ENCODE measurements at regions of chr19 and their contacts with region 1.

Region 1: DNA sequence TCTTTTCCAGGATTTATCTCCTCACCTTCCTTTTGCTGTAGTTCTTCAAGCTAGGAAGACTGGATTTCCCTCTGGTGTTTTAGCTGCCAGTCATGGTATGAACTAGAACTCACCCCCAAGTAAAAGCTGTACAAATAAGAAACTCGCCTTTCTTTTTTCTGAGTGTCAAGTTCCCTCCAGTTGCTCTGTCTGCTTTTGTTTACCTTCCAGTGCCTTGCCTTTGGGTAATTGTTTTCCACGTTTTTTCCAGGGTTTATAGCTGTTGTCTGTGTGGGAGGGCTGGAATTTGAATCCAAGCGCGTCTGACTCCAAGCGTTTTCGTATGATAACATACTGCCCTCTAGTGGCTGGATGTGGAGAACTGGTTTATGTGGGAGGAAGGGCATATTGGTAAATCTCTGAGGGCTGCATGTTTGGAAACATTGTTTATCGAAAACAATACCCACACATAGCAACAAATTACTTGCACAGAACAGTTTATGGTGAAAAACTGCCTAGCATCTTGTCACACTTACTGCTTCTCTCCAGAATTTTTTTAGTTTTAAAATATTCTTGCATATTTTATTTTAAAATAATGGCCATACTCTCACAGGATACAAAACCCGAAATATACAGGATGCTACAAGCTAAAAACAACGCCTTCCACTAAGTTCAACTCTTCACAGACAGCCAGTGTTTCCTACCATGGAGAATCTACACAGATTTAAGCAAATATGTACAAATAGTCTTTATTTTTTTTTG is 19.2 kb downstream of the RCN3 start:
- DNase-seq: peak; percentile 79
- H3K4me3 Mint-ChIP-seq: peak overlapping the region; percentile 37
- H3K27ac Mint-ChIP-seq: peak overlapping the region; percentile 75
- H3K4me1 Mint-ChIP-seq: peaks cover 65% of the 10 kb centered on the region
- H3K27me3 Mint-ChIP-seq: peaks cover 7% of the 10 kb centered on the region

Region 2: GRCh38 chr19:49473868-49474544 is 73.0 kb before region 1 on chr19 and contains the start of gene FLT3LG:
- CTCF ChIA-PET with region 1: interaction called, 15 read pairs
- DNase-seq: peak; percentile 99
- H3K4me3 Mint-ChIP-seq: peak within 1 kb of the TSS; percentile 89
- H3K27ac Mint-ChIP-seq: peak within 1 kb of the TSS; percentile 90
- H3K4me1 Mint-ChIP-seq: peaks cover 61% of the 10 kb centered on the region
- H3K27me3 Mint-ChIP-seq: peaks cover 6% of the 10 kb centered on the region

Region 3: DNA sequence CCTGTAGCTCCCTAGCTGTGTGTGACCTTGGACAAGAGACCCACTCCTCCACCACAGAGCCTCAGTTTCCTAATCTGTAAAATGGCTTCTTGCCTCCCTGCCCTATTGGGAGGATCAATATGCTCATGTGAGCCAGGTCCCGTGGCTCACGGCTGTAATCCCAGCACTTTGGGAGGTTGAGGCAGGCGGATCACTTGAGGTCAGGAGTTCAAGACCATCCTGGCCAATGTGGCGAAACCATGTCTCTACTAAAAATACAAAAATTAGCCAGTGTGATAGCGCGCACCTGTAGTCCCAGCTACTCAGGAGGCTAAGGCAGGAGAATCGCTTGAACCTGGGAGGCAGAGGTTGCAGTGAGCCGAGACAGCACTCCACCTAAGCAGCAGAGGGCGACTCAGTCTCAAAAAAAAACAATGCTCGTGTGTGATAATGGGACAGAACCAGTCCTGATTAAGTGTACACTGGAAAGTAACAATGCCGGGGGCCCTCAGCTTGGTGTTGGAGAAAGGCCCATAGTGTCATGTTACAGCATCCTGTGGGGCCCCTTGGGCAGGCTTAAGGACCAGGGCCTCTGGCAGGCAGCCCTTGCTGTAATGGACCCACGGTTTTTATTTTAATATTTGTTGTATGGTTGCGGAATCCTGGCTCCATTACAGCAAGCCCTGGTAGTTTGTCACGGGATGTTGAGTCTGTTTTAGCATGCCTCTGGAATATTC is 44.0 kb before region 1 on chr19:
- CTCF ChIA-PET with region 1: interaction called, 183 read pairs
- DNase-seq: peak; percentile 70
- H3K4me3 Mint-ChIP-seq: peak overlapping the region; percentile 4
- H3K27ac Mint-ChIP-seq: peak overlapping the region; percentile 99
- H3K4me1 Mint-ChIP-seq: peaks cover 54% of the 10 kb centered on the region
- H3K27me3 Mint-ChIP-seq: peaks cover 4% of the 10 kb centered on the region

Region 4: DNA sequence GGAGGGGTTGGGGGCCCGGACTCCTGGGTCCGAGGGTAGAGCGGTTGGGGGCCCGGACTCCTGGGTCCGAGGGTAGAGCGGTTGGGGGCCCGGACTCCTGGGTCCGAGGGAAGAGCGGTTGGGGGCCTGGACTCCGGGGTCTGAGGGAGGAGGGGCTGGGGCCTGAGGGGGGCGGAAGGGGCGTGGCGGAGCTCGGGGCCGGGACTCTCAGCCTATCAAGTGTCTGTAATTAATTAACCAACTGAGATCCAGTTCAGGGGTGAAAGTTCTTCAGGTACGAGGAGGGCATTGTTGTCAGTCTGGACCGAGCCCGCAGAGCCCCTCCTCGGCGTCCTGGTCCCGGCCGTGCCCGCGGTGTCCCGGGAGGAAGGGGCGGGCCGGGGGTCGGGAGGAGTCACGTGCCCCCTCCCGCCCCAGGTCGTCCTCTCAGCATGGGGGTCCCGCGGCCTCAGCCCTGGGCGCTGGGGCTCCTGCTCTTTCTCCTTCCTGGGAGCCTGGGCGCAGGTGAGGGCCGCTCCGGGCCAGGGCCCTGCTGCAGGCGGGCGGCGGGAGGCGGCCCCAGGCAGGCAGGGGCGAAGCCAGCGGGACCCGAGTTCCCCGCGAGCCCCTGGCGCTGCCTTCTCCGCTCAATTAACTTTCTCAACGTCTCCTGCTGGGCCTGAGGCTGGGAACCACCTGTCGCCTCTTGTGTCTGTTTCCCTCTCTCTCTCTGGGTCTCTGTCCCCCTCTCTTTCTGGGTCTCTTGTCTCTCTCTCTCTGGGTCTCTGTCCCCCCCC is 33.8 kb before region 1 on chr19:
- CTCF ChIA-PET with region 1: interaction called, 183 read pairs
- DNase-seq: peak; percentile 57
- H3K4me3 Mint-ChIP-seq: peak overlapping the region; percentile 75
- H3K27ac Mint-ChIP-seq: peak overlapping the region; percentile 55
- H3K4me1 Mint-ChIP-seq: peaks cover 33% of the 10 kb centered on the region
- H3K27me3 Mint-ChIP-seq: peaks cover 28% of the 10 kb centered on the region

Region 5: DNA sequence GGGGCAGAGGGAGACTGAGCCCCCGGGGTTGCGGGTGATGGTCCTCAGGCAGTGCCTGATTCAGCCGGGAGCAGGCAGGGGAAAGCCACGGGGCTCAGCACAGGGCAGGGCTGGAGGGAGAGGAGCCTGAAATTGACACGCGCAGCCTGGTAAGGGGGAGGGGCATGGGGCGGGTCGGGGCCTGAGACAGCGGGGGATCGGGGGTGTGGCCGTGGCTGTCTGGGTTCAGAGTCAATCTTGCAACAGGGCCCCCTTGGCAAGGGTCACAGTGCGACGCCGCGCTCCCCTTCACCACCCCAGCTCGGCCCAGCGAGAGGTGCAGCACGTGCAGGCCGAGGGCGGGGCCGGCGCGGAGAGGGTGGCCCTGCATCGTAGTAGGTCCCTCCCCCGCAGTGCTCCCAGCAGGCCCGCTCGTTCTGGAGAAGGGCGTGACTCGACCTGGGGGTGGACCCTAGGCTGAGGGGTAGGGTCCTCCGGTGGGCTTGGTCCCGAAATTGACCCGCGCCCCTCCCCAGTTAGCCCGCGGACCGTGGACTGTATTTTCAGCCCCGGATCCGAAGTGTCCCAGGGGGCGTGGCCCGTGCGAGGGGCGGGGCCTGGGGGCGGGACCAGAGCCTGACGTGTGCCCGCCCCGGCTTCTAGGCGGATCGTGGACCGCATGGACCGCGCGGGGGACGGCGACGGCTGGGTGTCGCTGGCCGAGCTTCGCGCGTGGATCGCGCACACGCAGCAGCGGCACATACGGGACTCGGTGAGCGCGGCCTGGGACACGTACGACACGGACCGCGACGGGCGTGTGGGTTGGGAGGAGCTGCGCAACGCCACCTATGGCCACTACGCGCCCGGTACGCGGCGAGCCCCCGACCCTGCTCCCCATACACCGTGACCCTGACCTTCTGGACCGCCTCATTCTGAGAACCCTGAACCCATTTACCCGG is 13.2 kb before region 1 on chr19:
- CTCF ChIA-PET with region 1: interaction called, 19 read pairs
- DNase-seq: peak; percentile 89
- H3K4me3 Mint-ChIP-seq: peak overlapping the region; percentile 66
- H3K27ac Mint-ChIP-seq: peak overlapping the region; percentile 77
- H3K4me1 Mint-ChIP-seq: peaks cover 30% of the 10 kb centered on the region
- H3K27me3 Mint-ChIP-seq: peaks cover 40% of the 10 kb centered on the region

Region 6: GRCh38 chr19:49570138-49570856 is 23.3 kb after region 1 on chr19:
- CTCF ChIA-PET with region 1: interaction called, 78 read pairs
- DNase-seq: peak; percentile 88
- H3K4me3 Mint-ChIP-seq: peak overlapping the region; percentile 49
- H3K27ac Mint-ChIP-seq: peak overlapping the region; percentile 98
- H3K4me1 Mint-ChIP-seq: peaks cover 80% of the 10 kb centered on the region
- H3K27me3 Mint-ChIP-seq: no peaks in the 10 kb centered on the region

Region 7: GRCh38 chr19:49631014-49631588 is 84.1 kb after region 1 on chr19:
- CTCF ChIA-PET with region 1: no interaction called
- DNase-seq: no peak
- H3K4me3 Mint-ChIP-seq: no peak overlapping the region
- H3K27ac Mint-ChIP-seq: peak overlapping the region; percentile 21
- H3K4me1 Mint-ChIP-seq: peaks cover 4% of the 10 kb centered on the region
- H3K27me3 Mint-ChIP-seq: peaks cover 4% of the 10 kb centered on the region